Activated CD8-positive, alpha-beta T cell treated with anti-CD3 and anti-CD28 coated beads for 36 hours (primary cell): ENCODE measurements at regions of chr22 and their contacts with region 1.

Region 1: GRCh38 chr22:25564320-25564978 is at the start of gene GRK3:
- DNase-seq: peak; percentile 81
- ATAC-seq: peak; percentile 75
- H3K4me3 Mint-ChIP-seq: peak within 1 kb of the TSS; percentile 95
- H3K27ac Mint-ChIP-seq: peak within 1 kb of the TSS; percentile 91
- H3K4me1 Mint-ChIP-seq: peaks cover 42% of the 10 kb centered on the region
- H3K27me3 Mint-ChIP-seq: peaks cover 2% of the 10 kb centered on the region
- CTCF ChIP-seq: no peak
- total RNA-seq, gene GRK3: 26.3 to 26.7 TPM

Region 2: DNA sequence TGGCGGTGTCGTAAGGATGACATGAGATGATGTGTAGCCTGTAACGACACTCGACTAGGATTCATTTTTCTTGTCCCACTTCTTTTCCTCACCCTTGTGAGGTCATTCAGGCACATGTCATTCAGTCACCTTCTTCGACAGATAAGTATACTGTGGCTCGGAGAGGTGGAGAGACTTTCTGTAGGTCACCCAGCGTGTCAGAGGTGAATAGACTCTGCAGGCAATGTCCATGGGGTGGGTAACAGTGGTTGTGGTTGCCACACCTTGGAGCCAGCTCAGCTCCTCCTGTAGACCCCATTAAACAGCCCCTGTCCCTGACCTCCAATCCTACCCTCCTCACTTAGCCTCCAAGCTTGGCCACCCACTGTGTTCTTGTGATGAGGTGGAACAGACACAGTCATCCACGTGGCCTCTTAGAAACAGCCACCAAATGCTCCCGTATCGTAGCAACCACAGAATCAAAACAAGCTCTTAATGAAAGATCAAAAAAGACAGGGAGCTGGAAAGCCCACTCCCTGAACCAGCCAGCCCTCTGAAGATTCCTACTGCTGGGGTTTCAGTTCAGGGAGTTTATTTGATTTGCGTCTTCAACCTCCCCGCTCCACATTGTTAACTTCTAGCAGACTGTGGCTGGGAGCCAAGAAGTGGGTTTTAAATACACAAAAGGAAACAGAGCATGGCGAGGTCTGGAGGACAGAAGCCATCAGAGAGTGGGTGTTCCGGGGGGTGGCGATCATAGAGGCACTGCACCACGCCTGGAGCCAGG is 89.0 kb before region 1 on chr22:
- CTCF ChIA-PET with region 1: no interaction called
- POLR2A ChIA-PET with region 1: no interaction called
- intact Hi-C with region 1: loop called (anchors 5 kb)
- DNase-seq: peak; percentile 29
- ATAC-seq: peak; percentile 42
- H3K4me3 Mint-ChIP-seq: no peak overlapping the region
- H3K27ac Mint-ChIP-seq: no peak overlapping the region
- H3K4me1 Mint-ChIP-seq: peaks cover 7% of the 10 kb centered on the region
- H3K27me3 Mint-ChIP-seq: no peaks in the 10 kb centered on the region
- CTCF ChIP-seq: no peak